Tibial artery (tissue), 4 donors: ENCODE measurements at regions of chr9 and their contacts with region 1.

Region 1: DNA sequence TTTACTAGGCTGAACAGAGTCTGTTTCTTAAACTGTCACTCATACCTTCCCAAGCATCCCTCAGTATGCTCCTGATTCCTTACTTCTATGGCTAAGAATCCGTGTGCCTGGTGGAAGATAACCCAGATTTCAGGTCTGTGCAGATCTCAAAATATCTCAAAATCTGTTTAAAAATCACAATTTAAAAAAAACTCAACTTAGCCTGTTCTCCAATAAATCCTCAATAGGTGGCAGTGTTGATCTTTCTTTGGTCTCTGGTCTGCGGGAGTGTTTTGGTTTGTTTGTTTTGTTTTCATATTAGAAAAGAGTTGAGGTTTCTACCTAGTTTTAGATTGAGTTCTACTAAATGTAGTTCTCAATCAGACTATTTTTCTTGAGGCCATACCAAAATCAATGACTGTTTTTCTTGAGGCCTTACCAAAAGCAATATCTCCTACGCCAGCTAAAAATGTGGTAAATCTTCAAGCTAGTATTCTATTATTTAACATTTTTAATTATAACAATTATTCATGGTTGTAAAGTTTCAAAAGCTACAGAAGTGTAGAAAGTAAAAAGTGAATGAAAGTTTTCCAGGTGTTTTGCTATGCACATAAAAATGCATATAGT is 57.9 kb downstream of the TGFBR1 start:
- DNase-seq: no peak
- H3K4me3 ChIP-seq: no peak overlapping the region
- H3K27ac ChIP-seq: peak overlapping the region; percentile 14 to 19
- H3K4me1 ChIP-seq: peaks cover 0 to 25% (median 12%) of the 10 kb centered on the region in 4 donors
- H3K27me3 ChIP-seq: no peaks in the 10 kb centered on the region
- CTCF ChIP-seq: peak; percentile 52 to 57

Region 2: DNA sequence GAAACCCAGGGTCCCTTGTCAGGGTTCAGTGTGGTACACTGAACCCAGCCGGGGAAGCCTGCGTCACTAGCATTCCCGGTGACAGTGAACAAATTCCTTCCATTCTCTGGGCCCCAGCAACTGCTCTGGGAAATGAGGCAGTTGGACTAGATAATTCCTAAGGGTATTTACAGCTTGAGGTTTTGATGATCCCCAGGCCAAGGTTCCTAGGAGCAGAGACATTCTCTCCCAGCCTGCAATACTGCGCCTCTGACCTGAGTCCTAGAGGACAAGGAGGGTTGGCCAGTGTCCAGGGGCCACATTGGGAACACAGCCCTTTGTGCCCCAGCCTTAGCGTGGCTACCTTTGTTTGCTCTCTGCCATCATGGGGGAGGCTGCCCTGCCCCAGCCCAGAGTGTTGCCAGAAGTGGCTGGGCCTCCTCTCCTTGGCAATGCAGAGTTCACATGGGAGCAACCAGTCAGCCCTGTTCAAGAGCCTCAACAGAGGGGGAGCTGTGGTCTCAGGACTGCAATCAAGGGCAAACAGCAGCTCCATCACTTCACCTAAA is 237.4 kb after region 1 on chr9:
- intact Hi-C with region 1: no loop called
- DNase-seq: no peak
- H3K4me3 ChIP-seq: no peak overlapping the region
- H3K27ac ChIP-seq: no peak overlapping the region
- H3K4me1 ChIP-seq: no peaks in the 10 kb centered on the region
- H3K27me3 ChIP-seq: no peaks in the 10 kb centered on the region
- CTCF ChIP-seq: no peak

Region 3: GRCh38 chr9:100011062-100011681 is 848.3 kb after region 1 on chr9:
- intact Hi-C with region 1: loop called (anchors 10 kb)
- DNase-seq: no peak
- H3K4me3 ChIP-seq: no peak overlapping the region
- H3K27ac ChIP-seq: no peak overlapping the region
- H3K4me1 ChIP-seq: no peaks in the 10 kb centered on the region
- H3K27me3 ChIP-seq: no peaks in the 10 kb centered on the region
- CTCF ChIP-seq: peak; percentile 26 to 32